Esophagus squamous epithelium (tissue), 5 donors: ENCODE measurements at regions of chr19 and their contacts with region 1.

Region 1: DNA sequence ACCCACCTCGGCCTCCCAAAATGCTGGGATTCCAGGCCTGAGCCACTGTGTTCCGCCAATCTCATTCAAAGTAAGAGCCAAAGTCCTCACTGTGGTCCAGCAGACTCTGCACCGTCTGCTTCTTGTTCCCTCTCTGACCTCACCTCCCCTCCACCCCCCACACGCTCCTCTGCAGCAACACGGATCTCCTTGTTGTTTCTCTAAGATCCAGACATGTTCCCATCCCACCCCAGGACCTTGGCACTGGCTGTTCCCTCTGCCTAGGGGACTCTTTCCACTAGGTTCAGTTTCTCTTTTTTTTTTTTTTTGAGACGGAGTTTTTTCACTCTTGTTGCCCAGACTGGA is 38.4 kb downstream of the LTBP4 start:
- DNase-seq: no peak
- H3K4me3 ChIP-seq: no peak overlapping the region
- H3K27ac ChIP-seq: no peak overlapping the region
- H3K4me1 ChIP-seq: peaks cover 0 to 24% (median 6%) of the 10 kb centered on the region in 3 donors
- H3K27me3 ChIP-seq: no peaks in the 10 kb centered on the region
- CTCF ChIP-seq: no peak
- POLR2A ChIP-seq: no peak

Region 2: DNA sequence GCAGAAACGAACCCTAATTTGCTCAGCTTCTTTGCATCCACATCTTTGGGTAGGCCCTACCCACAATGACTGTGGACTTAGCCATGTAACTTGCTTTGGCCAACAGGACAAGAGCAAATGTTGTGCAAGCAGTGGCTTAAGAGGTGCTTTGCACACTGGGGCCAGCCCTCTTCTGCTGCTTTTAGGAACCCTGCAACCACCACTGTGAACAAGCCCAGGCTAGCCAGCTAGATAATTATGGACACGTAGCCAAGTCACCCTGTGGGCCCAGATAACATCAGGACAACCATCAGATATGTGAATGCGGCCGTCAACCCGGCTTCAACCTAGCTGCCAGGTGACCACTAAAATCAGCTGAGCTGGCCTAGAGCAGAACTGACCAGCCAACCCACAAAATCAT is 308.5 kb before region 1 on chr19:
- intact Hi-C with region 1: no loop called
- DNase-seq: no peak
- H3K4me3 ChIP-seq: no peak overlapping the region
- H3K27ac ChIP-seq: no peak overlapping the region
- H3K4me1 ChIP-seq: peaks cover 0 to 5% (median 0%) of the 10 kb centered on the region in 3 donors
- H3K27me3 ChIP-seq: no peaks in the 10 kb centered on the region
- CTCF ChIP-seq: no peak
- POLR2A ChIP-seq: no peak

Region 3: DNA sequence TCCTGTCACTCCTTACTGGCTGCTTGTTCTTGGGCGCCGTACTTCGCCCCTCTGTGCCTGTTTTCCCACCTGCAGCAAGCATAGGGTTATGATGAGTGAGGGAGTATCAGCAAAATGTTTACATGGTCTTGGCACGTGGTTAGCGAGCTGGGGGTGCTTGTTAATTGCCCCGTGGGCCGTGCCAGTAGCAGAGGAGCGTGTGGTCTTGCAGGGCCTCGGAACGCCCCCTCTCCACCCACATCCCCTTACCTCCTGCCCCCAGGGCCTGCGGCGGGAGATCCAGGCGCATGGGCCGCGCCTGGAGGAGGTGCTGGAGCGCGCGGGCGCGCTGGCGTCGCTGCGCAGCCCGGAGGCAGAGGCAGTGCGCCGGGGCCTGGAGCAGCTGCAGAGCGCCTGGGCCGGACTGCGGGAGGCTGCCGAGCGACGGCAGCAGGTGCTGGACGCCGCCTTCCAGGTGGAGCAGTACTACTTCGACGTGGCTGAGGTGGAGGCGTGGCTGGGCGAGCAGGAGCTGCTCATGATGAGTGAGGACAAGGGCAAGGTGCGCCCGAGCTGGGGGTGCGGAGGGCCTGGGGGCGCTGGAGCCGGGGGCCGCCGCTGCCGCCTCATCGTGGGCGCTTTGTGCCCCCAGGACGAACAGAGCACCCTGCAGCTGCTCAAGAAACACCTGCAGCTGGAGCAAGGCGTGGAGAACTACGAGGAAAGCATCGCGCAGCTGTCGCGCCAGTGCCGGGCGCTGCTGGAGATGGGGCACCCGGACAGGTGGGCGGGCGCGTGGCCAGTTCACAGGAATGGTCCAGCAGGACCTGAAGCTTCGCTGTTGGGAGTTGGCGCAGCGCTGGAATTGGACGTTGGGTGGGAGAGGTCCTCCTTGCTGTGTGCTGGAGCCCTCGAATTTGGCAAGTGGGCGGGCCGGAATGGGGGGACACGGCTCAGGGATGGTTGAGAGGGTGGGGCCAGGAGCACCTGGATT is 85.4 kb before region 1 on chr19:
- intact Hi-C with region 1: loop called (anchors 5 kb)
- DNase-seq: no peak
- H3K4me3 ChIP-seq: no peak overlapping the region
- H3K27ac ChIP-seq: no peak overlapping the region
- H3K4me1 ChIP-seq: peaks cover under 1 to 10% (median 7%) of the 10 kb centered on the region in 3 donors
- H3K27me3 ChIP-seq: peaks cover 0 to 68% (median 0%) of the 10 kb centered on the region in 4 donors
- CTCF ChIP-seq: no peak
- POLR2A ChIP-seq: no peak

Region 4: GRCh38 chr19:40570313-40571004 is 69.2 kb before region 1 on chr19:
- intact Hi-C with region 1: no loop called
- DNase-seq: peak; percentile 94
- H3K4me3 ChIP-seq: peak overlapping the region; percentile 28 to 68 (median 45)
- H3K27ac ChIP-seq: peak overlapping the region; percentile 68 to 80 (median 76)
- H3K4me1 ChIP-seq: peaks cover 10 to 29% (median 13%) of the 10 kb centered on the region in 3 donors
- H3K27me3 ChIP-seq: peaks cover 12 to 39% (median 16%) of the 10 kb centered on the region in 4 donors
- CTCF ChIP-seq: peak in 3 of 6 experiments; percentile 34 to 57 (median 36)
- POLR2A ChIP-seq: peak in 2 of 4 donors; percentile 34 to 44

Region 5: GRCh38 chr19:40584007-40584406 is 55.6 kb before region 1 on chr19:
- intact Hi-C with region 1: no loop called
- DNase-seq: no peak
- H3K4me3 ChIP-seq: no peak overlapping the region
- H3K27ac ChIP-seq: no peak overlapping the region
- H3K4me1 ChIP-seq: no peaks in the 10 kb centered on the region
- H3K27me3 ChIP-seq: no peaks in the 10 kb centered on the region
- CTCF ChIP-seq: peak in 1 of 6 experiments; percentile 38
- POLR2A ChIP-seq: no peak

Region 6: DNA sequence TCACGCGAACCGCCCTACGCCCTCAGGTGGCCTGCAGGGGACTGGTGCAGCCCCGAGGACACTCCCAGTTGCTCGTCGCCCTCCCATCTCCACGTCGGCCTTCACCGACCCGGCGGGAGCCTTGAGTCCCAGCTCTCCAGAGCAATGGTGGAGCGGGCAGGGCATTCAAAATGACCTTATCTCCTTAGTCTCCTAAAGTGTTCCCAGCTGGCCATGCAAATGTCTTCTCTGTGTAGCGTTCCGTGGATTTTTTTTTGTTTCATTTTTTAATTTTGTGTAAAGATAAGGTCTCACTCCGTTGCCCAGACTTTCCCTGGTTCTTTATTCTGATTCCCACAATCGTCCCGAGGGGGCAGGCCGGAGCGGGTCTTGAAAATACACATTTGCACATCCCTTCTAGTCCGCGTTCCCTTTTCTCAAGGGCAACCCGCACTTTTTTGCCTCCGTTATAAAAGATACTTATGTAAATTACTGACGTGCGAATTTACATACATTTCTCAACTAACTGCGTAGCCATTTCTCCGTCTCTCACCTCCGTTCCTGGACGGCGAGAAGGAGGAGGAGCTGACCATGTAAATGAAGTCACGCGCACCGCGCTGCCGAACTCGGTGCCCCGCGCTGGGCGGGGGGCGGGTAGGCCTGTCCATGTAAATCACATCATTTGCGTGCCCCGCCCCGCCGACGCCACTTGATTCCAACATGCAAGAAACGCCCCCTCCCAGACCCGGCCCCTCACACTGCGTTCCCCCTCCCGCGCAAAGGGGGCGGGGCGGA is 158.8 kb after region 1 on chr19:
- intact Hi-C with region 1: no loop called
- DNase-seq: peak; percentile 100
- H3K4me3 ChIP-seq: peak overlapping the region; percentile 22 to 99 (median 98)
- H3K27ac ChIP-seq: peak overlapping the region; percentile 94 to 98 (median 96)
- H3K4me1 ChIP-seq: peaks cover 35 to 46% (median 44%) of the 10 kb centered on the region in 3 donors
- H3K27me3 ChIP-seq: no peaks in the 10 kb centered on the region
- CTCF ChIP-seq: peak in 5 of 6 experiments; percentile 4 to 62 (median 53)
- POLR2A ChIP-seq: peak in 1 of 4 donors; percentile 59